ENCODE measurements at regions of chr4 and their contacts with region 1.

Region 1: GRCh38 chr4:74127745-74128144 is 28.8 kb upstream of the CXCL2 start:
- DNase-seq: no peak
- ATAC-seq: no peak
- H3K4me3 ChIP-seq: no peak overlapping the region
- H3K27ac ChIP-seq: no peak overlapping the region
- H3K4me1 ChIP-seq: no peaks in the 10 kb centered on the region
- H3K27me3 ChIP-seq: no peaks in the 10 kb centered on the region
- CTCF ChIP-seq: no peak
- EP300 ChIP-seq: no peak
- POLR2A ChIP-seq: no peak
- RAD21 ChIP-seq: no peak

Region 2: DNA sequence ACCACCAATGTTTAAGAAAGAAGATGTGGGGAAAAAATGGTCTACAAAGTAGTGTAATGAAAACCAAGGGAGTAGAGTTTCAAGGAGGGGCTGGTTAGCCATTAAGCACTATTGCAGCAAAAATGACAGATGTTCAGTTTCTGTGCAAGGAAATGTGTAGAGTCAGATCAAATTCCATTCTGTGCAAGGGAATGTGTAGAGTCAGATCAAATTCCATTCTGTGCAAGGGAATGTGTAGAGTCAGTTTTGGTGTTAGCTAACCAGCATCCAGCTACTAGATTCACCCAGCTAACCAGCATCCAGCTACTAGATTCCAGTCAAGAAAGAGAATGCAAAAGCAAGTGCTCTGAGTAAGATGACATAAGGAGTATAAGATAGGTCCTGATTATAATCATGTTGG is 1267.0 kb before region 1 on chr4:
- CTCF ChIA-PET with region 1: no interaction called
- POLR2A ChIA-PET with region 1: no interaction called
- RAD21 ChIA-PET with region 1: no interaction called
- SMC1A ChIA-PET with region 1: no interaction called
- in situ Hi-C with region 1: no loop called
- intact Hi-C with region 1: no loop called
- DNase-seq: no peak
- ATAC-seq: no peak
- H3K4me3 ChIP-seq: no peak overlapping the region
- H3K27ac ChIP-seq: no peak overlapping the region
- H3K4me1 ChIP-seq: no peaks in the 10 kb centered on the region
- H3K27me3 ChIP-seq: no peaks in the 10 kb centered on the region
- CTCF ChIP-seq: no peak
- EP300 ChIP-seq: no peak
- POLR2A ChIP-seq: no peak
- RAD21 ChIP-seq: no peak

Region 3: GRCh38 chr4:73086095-73086868 is 1041.5 kb before region 1 on chr4:
- CTCF ChIA-PET with region 1: no interaction called
- POLR2A ChIA-PET with region 1: no interaction called
- RAD21 ChIA-PET with region 1: no interaction called
- SMC1A ChIA-PET with region 1: no interaction called
- in situ Hi-C with region 1: no loop called
- intact Hi-C with region 1: no loop called
- DNase-seq: no peak
- ATAC-seq: no peak
- H3K4me3 ChIP-seq: no peak overlapping the region
- H3K27ac ChIP-seq: 0 out of 2 replicates have a peak overlapping the region, but pooled peaks have one; percentile 18
- H3K4me1 ChIP-seq: no peaks in the 10 kb centered on the region
- H3K27me3 ChIP-seq: no peaks in the 10 kb centered on the region
- CTCF ChIP-seq: no peak
- EP300 ChIP-seq: no peak
- POLR2A ChIP-seq: no peak
- RAD21 ChIP-seq: no peak

Region 4: DNA sequence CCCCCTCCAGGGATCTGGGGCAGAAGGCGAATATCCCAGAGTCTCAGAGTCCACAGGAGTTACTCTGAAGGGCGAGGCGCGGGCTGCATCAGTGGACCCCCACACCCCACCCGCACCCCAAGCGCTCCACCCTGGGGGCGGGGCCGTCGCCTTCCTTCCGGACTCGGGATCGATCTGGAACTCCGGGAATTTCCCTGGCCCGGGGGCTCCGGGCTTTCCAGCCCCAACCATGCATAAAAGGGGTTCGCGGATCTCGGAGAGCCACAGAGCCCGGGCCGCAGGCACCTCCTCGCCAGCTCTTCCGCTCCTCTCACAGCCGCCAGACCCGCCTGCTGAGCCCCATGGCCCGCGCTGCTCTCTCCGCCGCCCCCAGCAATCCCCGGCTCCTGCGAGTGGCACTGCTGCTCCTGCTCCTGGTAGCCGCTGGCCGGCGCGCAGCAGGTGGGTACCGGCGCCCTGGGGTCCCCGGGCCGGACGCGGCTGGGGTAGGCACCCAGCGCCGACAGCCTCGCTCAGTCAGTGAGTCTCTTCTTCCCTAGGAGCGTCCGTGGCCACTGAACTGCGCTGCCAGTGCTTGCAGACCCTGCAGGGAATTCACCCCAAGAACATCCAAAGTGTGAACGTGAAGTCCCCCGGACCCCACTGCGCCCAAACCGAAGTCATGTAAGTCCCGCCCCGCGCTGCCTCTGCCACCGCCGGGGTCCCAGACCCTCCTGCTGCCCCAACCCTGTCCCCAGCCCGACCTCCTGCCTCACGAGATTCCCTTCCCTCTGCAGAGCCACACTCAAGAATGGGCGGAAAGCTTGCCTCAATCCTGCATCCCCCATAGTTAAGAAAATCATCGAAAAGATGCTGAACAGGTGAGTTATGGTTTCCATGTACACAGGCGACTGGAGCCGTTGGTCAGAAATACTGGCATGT is 258.4 kb before region 1 on chr4 and contains the start of gene CXCL1:
- CTCF ChIA-PET with region 1: no interaction called
- POLR2A ChIA-PET with region 1: no interaction called
- RAD21 ChIA-PET with region 1: no interaction called
- SMC1A ChIA-PET with region 1: no interaction called
- in situ Hi-C with region 1: no loop called
- intact Hi-C with region 1: loop called (anchors 5 kb)
- DNase-seq: no peak
- ATAC-seq: no peak; the same call in 2 of the 3 replicates
- H3K4me3 ChIP-seq: no peak within 1 kb of the TSS
- H3K27ac ChIP-seq: no peak within 1 kb of the TSS
- H3K4me1 ChIP-seq: no peaks in the 10 kb centered on the region
- H3K27me3 ChIP-seq: peaks cover 2 to 8% of the 10 kb centered on the region in 2 experiments; a peak in 2 of 4 replicates
- CTCF ChIP-seq: no peak
- EP300 ChIP-seq: no peak
- POLR2A ChIP-seq: no peak
- RAD21 ChIP-seq: no peak
- polyA plus RNA-seq, gene CXCL1: not detected

Measured in GM12878 (cell line).